Activated CD4-positive, alpha-beta T cell treated with anti-CD3 and anti-CD28 coated beads for 36 hours (primary cell): ENCODE measurements at regions of chr14 and their contacts with region 1.

Region 1: DNA sequence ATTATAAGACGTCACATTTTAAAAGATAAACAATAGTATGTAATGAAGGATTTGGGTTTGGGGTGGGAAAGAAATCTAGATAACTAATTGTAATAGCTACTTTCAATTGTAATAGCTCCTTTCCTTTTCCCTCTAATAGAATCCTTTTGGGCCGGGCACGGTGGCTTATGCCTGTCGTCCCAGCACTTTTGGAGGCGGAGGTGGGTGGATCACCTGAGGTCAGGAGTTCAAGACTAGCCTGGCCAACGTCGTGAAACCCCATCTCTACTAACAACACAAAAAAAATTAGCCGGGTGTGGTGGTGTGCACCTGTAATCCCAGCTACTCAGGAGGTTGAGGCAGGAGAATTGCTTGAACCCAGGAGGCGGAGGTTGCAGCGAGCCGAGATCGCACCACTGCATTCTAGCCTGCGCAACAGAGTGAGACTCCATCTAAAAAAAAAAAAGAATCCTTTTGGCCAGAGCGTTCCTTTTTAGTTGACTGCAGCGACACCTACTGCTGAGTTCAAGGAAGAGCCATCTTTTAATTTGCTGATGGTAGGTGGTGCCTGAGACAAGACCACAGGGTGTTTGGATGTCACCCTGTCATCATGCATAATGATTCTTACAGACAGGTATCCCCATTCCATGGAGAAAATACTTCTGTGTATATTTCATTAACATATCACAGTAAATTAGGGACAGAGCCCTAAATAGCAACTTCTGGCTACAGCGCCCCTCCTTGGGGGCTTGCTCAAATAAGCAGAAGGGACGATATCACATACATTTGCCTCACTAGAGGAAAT is 79.5 kb downstream of the ARMH4 start:
- DNase-seq: peak; percentile 70
- ATAC-seq: peak; percentile 78
- H3K4me3 Mint-ChIP-seq: no peak overlapping the region
- H3K27ac Mint-ChIP-seq: no peak overlapping the region
- H3K4me1 Mint-ChIP-seq: no peaks in the 10 kb centered on the region
- H3K27me3 Mint-ChIP-seq: peaks cover 11% of the 10 kb centered on the region

Region 2: GRCh38 chr14:57317316-57317715 is 755.2 kb before region 1 on chr14:
- CTCF ChIA-PET with region 1: no interaction called
- POLR2A ChIA-PET with region 1: no interaction called
- intact Hi-C with region 1: loop called in 1 of 2 experiments (anchors 5 kb)
- DNase-seq: peak; percentile 83
- ATAC-seq: peak; percentile 49
- H3K4me3 Mint-ChIP-seq: no peak overlapping the region
- H3K27ac Mint-ChIP-seq: no peak overlapping the region
- H3K4me1 Mint-ChIP-seq: peaks cover 6% of the 10 kb centered on the region
- H3K27me3 Mint-ChIP-seq: no peaks in the 10 kb centered on the region

Region 3: GRCh38 chr14:57486767-57487379 is 585.6 kb before region 1 on chr14:
- CTCF ChIA-PET with region 1: interaction called, 5 read pairs
- POLR2A ChIA-PET with region 1: no interaction called
- intact Hi-C with region 1: loop called (anchors 1 to 5 kb)
- DNase-seq: no peak
- ATAC-seq: no peak
- H3K4me3 Mint-ChIP-seq: no peak overlapping the region
- H3K27ac Mint-ChIP-seq: no peak overlapping the region
- H3K4me1 Mint-ChIP-seq: no peaks in the 10 kb centered on the region
- H3K27me3 Mint-ChIP-seq: peaks cover 6% of the 10 kb centered on the region

Region 4: DNA sequence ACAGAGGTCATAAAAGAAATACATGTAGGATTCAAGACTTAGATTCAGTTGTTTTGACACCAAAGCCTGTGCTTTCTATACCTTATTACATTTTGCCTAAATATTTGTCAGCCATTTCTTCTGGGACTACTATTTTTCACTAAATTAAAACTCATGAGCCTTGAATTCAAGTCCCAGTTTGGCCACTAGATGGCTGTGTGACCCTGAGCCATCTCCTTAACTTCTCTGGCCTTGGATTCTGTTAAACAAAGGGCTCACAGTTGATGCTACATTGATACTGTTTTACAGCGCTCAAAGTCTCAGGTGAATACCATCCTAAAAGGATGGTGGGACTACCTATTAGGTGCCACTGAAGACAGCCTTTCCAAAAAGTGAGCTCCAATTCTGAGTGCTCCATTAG is 539.3 kb before region 1 on chr14:
- CTCF ChIA-PET with region 1: interaction called, 3 read pairs
- POLR2A ChIA-PET with region 1: no interaction called
- intact Hi-C with region 1: loop called (anchors 1 to 5 kb)
- DNase-seq: peak; percentile 35
- ATAC-seq: no peak
- H3K4me3 Mint-ChIP-seq: no peak overlapping the region
- H3K27ac Mint-ChIP-seq: no peak overlapping the region
- H3K4me1 Mint-ChIP-seq: no peaks in the 10 kb centered on the region
- H3K27me3 Mint-ChIP-seq: peaks cover 8% of the 10 kb centered on the region

Region 5: DNA sequence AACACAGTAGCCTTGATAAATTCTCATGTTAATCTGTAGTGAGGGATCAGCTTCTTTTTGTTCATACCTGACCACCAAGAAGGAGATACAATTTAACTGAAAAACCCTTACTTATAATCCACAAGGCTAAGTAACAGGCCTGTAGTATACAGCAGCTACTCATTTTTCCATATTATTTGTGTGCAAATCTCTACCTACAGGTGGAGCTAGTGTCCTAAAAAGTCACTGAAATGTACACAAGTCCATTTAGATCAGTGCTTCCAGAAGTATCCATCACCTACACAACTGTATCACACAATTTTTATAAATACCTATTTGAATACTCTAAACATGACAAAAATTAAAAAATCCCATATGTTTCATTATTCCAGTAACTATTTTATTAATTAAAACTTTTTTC is 379.8 kb before region 1 on chr14:
- CTCF ChIA-PET with region 1: interaction called, 3 read pairs
- POLR2A ChIA-PET with region 1: no interaction called
- intact Hi-C with region 1: loop called (anchors 2 to 5 kb)
- DNase-seq: no peak
- ATAC-seq: no peak
- H3K4me3 Mint-ChIP-seq: no peak overlapping the region
- H3K27ac Mint-ChIP-seq: no peak overlapping the region
- H3K4me1 Mint-ChIP-seq: no peaks in the 10 kb centered on the region
- H3K27me3 Mint-ChIP-seq: peaks cover 2% of the 10 kb centered on the region

Region 6: DNA sequence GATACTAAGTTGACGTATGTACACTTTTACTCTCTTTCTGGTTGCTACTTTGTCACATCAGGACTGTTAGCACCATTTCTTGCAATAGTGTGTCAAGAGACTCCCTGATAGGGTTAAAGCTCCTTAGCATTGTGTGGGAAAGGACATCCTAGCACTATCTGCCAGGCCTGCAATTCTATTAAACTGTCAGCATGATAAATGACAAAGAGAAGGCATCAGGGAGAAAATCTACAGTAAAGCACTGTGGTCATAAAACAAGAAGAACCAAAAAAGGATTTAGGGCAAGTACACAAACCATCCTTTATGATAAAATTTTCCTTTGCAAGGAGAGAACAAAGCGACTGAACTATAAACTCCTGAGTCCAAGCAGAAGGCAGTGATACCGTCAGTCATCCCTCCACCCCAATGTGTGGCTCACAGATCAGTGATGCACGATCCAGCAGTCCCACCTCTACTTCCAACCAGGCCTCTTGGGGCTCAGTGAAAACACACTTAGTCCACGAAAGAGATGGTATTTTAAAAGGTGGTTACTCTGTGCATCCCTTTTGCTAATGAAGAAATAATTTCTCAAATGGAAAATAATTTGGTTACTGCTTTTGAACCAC is 175.2 kb before region 1 on chr14:
- CTCF ChIA-PET with region 1: no interaction called
- POLR2A ChIA-PET with region 1: no interaction called
- intact Hi-C with region 1: loop called in 1 of 2 experiments (anchors 10 kb)
- DNase-seq: no peak
- ATAC-seq: no peak
- H3K4me3 Mint-ChIP-seq: no peak overlapping the region
- H3K27ac Mint-ChIP-seq: no peak overlapping the region
- H3K4me1 Mint-ChIP-seq: no peaks in the 10 kb centered on the region
- H3K27me3 Mint-ChIP-seq: peaks cover 12% of the 10 kb centered on the region

Region 7: DNA sequence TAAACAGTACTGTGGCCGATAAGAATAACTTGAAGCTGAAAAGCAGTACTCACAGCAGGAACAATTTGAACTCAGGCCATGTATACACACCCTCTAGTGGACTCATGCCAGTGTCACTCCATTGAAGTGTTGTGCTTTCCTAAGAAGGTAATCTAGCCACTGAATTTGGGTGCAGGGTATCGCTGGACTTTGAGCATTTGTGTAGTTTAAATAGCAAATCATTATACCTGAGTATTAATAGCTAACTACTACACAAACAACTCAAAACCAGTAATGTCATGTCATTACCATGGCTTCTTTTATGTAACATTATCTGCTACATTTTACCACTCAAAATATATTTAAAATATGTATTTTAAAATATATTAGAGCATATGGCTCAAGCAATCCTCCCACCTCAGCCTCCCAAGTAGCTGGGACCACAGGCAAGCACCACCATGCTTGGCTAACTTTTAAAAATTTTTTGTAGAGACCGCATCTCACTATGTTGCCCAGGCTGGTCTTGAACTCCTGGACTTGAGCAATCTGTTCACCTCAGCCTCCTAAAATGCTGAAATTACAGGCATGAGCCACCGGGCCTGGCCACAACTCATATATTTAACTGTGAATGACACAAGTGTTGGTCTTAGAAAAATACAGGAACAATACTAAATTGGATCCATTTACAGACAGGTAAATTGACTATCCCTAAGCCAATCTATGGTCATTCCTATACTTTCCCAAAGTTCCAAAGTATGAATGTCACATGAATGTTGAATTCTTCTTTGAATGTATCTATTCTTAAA is 200.3 kb after region 1 on chr14:
- CTCF ChIA-PET with region 1: no interaction called
- POLR2A ChIA-PET with region 1: no interaction called
- intact Hi-C with region 1: no loop called
- DNase-seq: no peak
- ATAC-seq: no peak
- H3K4me3 Mint-ChIP-seq: no peak overlapping the region
- H3K27ac Mint-ChIP-seq: peak overlapping the region; percentile 13
- H3K4me1 Mint-ChIP-seq: peaks cover 50% of the 10 kb centered on the region
- H3K27me3 Mint-ChIP-seq: no peaks in the 10 kb centered on the region